ENCODE measurements at regions of chr4 and their contacts with region 1.

Region 1: GRCh38 chr4:48085821-48086607 is 48.0 kb downstream of the TXK start:
- DNase-seq: no peak
- ATAC-seq: no peak
- H3K4me3 ChIP-seq: no peak overlapping the region
- H3K27ac ChIP-seq: no peak overlapping the region
- H3K4me1 ChIP-seq: no peaks in the 10 kb centered on the region
- H3K27me3 ChIP-seq: peaks cover 0 to 11% (median 0%) of the 10 kb centered on the region in 7 donors
- CTCF ChIP-seq: no peak

Region 2: GRCh38 chr4:47926639-47927258 is 159.3 kb before region 1 on chr4:
- intact Hi-C with region 1: loop called in 8 of 10 experiments (anchors 1 to 10 kb)
- DNase-seq: peak; percentile 17 to 41
- ATAC-seq: peak in 7 of 8 donors; percentile 64 to 87 (median 80)
- H3K4me3 ChIP-seq: peak overlapping the region in 3 of 10 donors; percentile 12 to 21 (median 19)
- H3K27ac ChIP-seq: no peak overlapping the region
- H3K4me1 ChIP-seq: peaks cover 0 to 17% (median 6%) of the 10 kb centered on the region in 9 donors
- H3K27me3 ChIP-seq: peaks cover 0 to 32% (median 12%) of the 10 kb centered on the region in 7 donors
- CTCF ChIP-seq: peak in 8 of 9 donors; percentile 35 to 73 (median 62)

Region 3: DNA sequence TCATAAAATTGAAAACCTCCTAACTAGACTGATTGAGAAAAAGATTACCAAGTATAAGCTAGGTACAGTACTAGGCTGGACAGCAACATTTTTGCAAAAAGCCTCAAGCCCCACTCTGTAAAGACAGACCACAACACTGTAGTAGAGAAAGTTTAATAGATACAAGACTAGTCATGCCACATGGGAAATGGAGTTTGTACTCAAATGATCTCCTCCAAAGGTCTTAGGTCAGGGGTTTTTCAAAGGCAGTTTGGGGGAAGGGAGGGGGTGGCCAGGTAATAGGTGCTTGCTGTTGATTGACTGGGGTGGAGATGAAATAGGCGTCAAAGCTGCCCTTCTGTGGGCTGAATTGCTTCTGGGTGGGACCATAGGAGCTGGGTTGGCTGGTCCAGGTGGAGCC is 83.7 kb before region 1 on chr4:
- intact Hi-C with region 1: loop called in 9 of 10 experiments (anchors 2 to 5 kb)
- DNase-seq: no peak
- ATAC-seq: no peak
- H3K4me3 ChIP-seq: no peak overlapping the region
- H3K27ac ChIP-seq: no peak overlapping the region
- H3K4me1 ChIP-seq: no peaks in the 10 kb centered on the region
- H3K27me3 ChIP-seq: no peaks in the 10 kb centered on the region
- CTCF ChIP-seq: no peak

Region 4: DNA sequence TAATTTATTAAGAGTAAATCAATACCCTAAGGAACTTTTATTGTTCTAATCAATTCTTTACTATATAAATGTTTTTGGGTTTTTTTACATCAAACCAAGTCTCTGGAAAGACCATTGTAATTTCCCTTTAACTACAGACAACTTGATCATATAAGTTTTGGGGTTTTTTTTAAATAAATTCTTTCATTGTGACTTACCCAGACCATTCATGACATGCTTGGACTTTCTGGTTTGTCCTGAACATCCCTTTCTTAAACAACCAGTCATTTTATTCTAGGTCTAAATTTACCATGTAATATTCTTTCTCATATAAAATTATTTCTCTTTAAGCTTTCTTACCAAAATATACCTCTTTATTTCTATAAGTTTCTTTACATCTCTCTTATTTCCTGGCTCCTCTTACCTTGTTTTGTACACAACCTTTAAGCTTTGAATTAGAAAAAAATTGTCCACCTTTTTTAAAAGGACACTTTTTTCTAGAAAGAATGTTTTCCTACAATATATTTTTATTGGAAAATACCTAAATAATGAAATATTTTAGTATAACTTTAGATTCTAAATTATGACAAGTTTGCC is 77.9 kb before region 1 on chr4:
- intact Hi-C with region 1: loop called in 9 of 10 experiments (anchors 2 to 5 kb)
- DNase-seq: no peak
- ATAC-seq: no peak
- H3K4me3 ChIP-seq: no peak overlapping the region
- H3K27ac ChIP-seq: no peak overlapping the region
- H3K4me1 ChIP-seq: peaks cover 0 to 3% (median 0%) of the 10 kb centered on the region in 9 donors
- H3K27me3 ChIP-seq: no peaks in the 10 kb centered on the region
- CTCF ChIP-seq: no peak

Region 5: GRCh38 chr4:48016141-48017103 is 69.6 kb before region 1 on chr4 and contains the starts of genes CNGA1 and NIPAL1:
- intact Hi-C with region 1: loop called in 5 of 10 experiments (anchors 5 kb)
- DNase-seq: peak; percentile 50 to 70
- ATAC-seq: peak; percentile 94 to 99 (median 97)
- H3K4me3 ChIP-seq: peak within 1 kb of the TSS; percentile 53 to 69 (median 62)
- H3K27ac ChIP-seq: peak within 1 kb of the TSS in 4 of 10 donors; percentile 18 to 59 (median 46)
- H3K4me1 ChIP-seq: peaks cover 0 to 20% (median 10%) of the 10 kb centered on the region in 9 donors
- H3K27me3 ChIP-seq: peaks cover 0 to 42% (median 26%) of the 10 kb centered on the region in 7 donors
- CTCF ChIP-seq: peak in 6 of 9 donors; percentile 28 to 53 (median 42)
- total RNA-seq, gene CNGA1: 0.11 to 1.6 (median 0.37) TPM in 7 of 10 donors, not detected in the others
- total RNA-seq, gene NIPAL1: 0.04 to 1.4 (median 0.45) TPM

Region 6: GRCh38 chr4:48141048-48141447 is 55.0 kb after region 1 on chr4:
- intact Hi-C with region 1: no loop called
- DNase-seq: no peak
- ATAC-seq: peak in 2 of 8 donors; percentile 42 to 56
- H3K4me3 ChIP-seq: no peak overlapping the region
- H3K27ac ChIP-seq: no peak overlapping the region
- H3K4me1 ChIP-seq: peaks cover 0 to 4% (median 0%) of the 10 kb centered on the region in 9 donors
- H3K27me3 ChIP-seq: no peaks in the 10 kb centered on the region
- CTCF ChIP-seq: peak; percentile 25 to 68 (median 60)

Region 7: GRCh38 chr4:48483006-48483776 is 397.2 kb after region 1 on chr4 and contains the start of gene SLC10A4:
- intact Hi-C with region 1: no loop called
- DNase-seq: no peak
- ATAC-seq: peak in 3 of 8 donors; percentile 34 to 50 (median 44)
- H3K4me3 ChIP-seq: peak within 1 kb of the TSS in 9 of 10 donors; percentile 29 to 51 (median 38)
- H3K27ac ChIP-seq: no peak within 1 kb of the TSS
- H3K4me1 ChIP-seq: peaks cover 0 to 24% (median 8%) of the 10 kb centered on the region in 9 donors
- H3K27me3 ChIP-seq: peaks cover 0 to 78% (median 63%) of the 10 kb centered on the region in 7 donors
- CTCF ChIP-seq: no peak
- total RNA-seq, gene SLC10A4: 0.15 to 0.61 (median 0.22) TPM in 9 of 10 donors, not detected in the other